ENCODE measurements at regions of chr3 and their contacts with region 1.

Region 1: DNA sequence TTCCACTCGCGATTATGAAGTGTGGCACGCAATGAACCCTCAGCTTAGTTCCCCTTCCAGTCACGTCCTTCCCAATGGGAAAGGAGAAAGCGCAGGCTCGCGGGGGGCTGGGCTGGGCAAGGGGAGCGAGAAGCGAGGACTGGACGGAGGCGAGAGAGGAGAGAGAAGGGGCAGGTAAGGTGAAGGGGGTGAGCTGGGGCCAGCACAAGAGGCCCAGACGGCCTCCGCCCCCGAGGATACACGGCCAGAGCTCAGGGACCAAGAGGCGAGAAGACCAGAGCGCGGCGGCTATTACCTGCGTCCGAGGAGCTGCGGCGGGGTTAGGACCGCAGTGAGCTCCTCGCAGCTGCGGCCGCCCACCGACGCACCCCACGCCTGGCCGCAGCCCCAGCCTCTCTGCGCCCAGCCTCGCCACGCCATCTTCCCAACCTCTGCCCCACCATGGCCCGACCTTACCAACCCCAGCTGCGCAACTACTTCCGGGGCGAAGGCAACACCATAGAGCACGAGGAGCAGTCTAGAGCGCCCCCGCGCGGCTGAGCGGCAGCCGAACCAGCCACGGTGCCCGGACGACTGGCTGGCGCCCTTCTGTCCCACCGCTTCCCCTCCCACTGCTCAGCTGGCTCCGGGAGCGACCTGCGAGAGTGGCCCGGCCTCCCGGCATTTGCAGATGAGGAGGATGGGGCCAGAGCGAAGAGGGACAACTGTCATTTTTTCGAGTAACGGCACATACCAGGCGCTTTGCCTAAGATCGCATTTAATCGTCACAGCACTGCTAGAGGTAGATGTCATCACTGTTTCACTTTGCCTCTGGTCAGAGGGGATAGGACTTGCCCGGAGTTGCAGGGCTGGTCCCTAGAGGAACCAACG is at the start of gene PARL:
- DNase-seq: peak; percentile 98
- H3K4me3 Mint-ChIP-seq: peak within 1 kb of the TSS; percentile 94
- H3K27ac Mint-ChIP-seq: peak within 1 kb of the TSS; percentile 88
- H3K4me1 Mint-ChIP-seq: peaks cover 31% of the 10 kb centered on the region
- H3K27me3 Mint-ChIP-seq: no peaks in the 10 kb centered on the region
- total RNA-seq, gene PARL: 92.0 to 92.8 TPM

Region 2: GRCh38 chr3:183188895-183189462 is 695.7 kb before region 1 on chr3:
- CTCF ChIA-PET with region 1: no interaction called
- intact Hi-C with region 1: loop called (anchors 2 kb)
- DNase-seq: peak; percentile 47
- H3K4me3 Mint-ChIP-seq: no peak overlapping the region
- H3K27ac Mint-ChIP-seq: no peak overlapping the region
- H3K4me1 Mint-ChIP-seq: peaks cover 27% of the 10 kb centered on the region
- H3K27me3 Mint-ChIP-seq: no peaks in the 10 kb centered on the region

Region 3: DNA sequence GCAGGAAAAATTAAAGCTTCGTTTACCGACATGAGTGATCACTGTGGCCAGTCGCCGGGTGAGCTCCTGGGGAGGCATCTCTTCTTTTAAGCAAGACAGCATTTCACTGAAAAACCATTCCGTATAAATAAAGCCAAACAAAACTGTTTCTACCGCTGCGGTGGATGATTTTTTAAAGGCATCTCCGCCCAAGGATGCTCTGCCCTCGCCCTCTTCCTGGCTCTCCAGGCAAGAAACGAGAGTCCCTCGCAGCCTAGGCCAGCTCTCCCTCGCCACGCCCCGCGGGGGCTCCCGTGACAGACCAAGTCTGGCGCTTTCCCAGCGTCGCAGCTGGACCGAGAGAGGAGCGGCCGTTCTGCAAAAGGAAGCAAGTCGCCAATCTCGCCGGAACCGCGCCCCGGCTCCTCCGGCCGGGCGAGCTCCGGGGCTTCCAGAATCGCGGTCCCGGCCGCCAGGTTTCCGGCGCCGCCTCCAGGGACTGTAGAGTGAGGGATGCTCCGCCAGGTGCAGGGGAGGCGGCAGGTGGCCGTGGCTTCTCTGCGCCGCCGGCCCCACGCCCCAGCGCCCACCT is 456.7 kb before region 1 on chr3:
- CTCF ChIA-PET with region 1: no interaction called
- intact Hi-C with region 1: loop called (anchors 1 kb)
- DNase-seq: peak; percentile 40
- H3K4me3 Mint-ChIP-seq: peak overlapping the region; percentile 79
- H3K27ac Mint-ChIP-seq: no peak overlapping the region
- H3K4me1 Mint-ChIP-seq: peaks cover 27% of the 10 kb centered on the region
- H3K27me3 Mint-ChIP-seq: peaks cover 14% of the 10 kb centered on the region

Region 4: DNA sequence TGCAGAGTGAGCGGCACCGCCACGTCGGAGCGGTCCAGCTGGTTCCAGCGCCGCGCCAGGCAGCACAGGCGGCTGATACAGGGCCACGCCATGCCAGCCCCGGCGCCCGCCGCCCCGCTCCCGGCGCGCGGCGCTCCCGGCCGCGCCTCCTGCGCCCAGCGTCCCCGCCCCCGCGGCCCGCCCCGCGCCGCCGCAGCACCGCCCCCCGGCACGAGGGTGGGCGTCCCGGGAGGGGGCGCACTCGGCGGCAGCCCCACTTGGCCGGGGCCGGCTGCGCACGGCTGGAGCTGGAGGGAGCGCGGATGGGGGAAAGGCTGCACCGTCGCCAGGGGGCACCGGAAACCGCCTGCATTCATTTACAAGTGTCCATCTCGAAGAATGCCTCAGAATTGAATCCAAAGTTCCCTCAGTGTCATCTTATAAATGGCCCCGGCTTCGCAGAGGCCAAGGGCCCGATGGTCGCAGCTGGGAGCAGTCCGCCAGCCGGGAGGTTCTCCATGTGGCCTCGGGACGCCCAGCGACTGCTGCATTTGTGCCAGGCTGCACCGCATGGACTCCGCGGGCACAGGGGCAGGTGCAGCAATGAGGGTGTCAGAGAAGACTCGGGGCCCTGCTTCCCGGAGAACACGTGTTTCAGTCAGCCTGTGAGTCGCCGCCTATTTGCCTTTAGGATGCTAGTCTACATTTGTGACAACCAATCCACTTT is 59.1 kb before region 1 on chr3 and contains the start of gene MAP6D1:
- CTCF ChIA-PET with region 1: interaction called, 15 read pairs
- intact Hi-C with region 1: loop called (anchors 1 kb)
- DNase-seq: peak; percentile 55
- H3K4me3 Mint-ChIP-seq: peak within 1 kb of the TSS; percentile 70
- H3K27ac Mint-ChIP-seq: no peak within 1 kb of the TSS
- H3K4me1 Mint-ChIP-seq: peaks cover 16% of the 10 kb centered on the region
- H3K27me3 Mint-ChIP-seq: no peaks in the 10 kb centered on the region
- total RNA-seq, gene MAP6D1: 1.1 to 1.4 TPM

Region 5: GRCh38 chr3:183895296-183895695 is 10.6 kb after region 1 on chr3:
- CTCF ChIA-PET with region 1: interaction called, 22 read pairs
- intact Hi-C with region 1: no loop called
- DNase-seq: peak; percentile 41
- H3K4me3 Mint-ChIP-seq: no peak overlapping the region
- H3K27ac Mint-ChIP-seq: no peak overlapping the region
- H3K4me1 Mint-ChIP-seq: peaks cover 3% of the 10 kb centered on the region
- H3K27me3 Mint-ChIP-seq: no peaks in the 10 kb centered on the region

Region 6: DNA sequence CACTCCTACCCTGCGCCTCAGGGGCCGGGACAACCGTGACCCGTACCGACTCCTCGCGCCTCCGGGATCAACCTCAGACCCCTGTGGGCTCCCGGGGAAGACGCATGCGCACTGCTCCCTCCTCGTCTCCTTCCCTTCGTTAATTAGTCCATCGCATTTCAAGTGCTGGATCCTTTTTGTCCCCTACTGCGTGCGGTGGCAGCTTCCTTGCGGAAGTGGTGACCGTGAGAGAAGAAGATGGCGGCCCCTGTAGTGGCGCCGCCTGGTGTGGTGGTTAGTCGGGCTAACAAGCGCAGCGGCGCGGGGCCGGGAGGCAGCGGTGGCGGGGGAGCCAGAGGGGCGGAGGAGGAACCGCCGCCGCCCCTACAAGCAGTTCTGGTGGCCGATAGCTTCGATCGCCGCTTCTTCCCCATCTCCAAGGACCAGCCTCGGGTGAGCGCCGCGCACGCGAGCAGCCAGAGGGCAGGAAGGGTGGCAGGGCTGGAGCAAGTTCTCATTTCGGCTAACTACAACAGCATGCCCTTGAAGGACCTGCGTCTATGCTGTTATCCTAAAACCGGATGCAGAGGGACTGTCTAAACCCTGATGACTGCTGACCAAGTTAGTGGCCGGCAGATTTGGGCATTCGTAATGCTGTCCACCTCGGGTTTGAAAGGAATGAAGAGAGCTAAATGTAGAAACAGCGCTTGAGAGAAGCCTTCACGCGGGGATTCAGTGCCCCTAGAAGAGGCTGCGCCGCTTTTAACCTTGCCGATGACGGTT is 250.7 kb after region 1 on chr3 and contains the start of gene EIF2B5:
- CTCF ChIA-PET with region 1: no interaction called
- intact Hi-C with region 1: loop called (anchors 2 kb)
- DNase-seq: peak; percentile 94
- H3K4me3 Mint-ChIP-seq: peak within 1 kb of the TSS; percentile 97
- H3K27ac Mint-ChIP-seq: peak within 1 kb of the TSS; percentile 97
- H3K4me1 Mint-ChIP-seq: peaks cover 29% of the 10 kb centered on the region
- H3K27me3 Mint-ChIP-seq: no peaks in the 10 kb centered on the region
- total RNA-seq, gene EIF2B5: 48.8 to 56.4 TPM